ENCODE measurements at regions of chr19 and their contacts with region 1.

Region 1: DNA sequence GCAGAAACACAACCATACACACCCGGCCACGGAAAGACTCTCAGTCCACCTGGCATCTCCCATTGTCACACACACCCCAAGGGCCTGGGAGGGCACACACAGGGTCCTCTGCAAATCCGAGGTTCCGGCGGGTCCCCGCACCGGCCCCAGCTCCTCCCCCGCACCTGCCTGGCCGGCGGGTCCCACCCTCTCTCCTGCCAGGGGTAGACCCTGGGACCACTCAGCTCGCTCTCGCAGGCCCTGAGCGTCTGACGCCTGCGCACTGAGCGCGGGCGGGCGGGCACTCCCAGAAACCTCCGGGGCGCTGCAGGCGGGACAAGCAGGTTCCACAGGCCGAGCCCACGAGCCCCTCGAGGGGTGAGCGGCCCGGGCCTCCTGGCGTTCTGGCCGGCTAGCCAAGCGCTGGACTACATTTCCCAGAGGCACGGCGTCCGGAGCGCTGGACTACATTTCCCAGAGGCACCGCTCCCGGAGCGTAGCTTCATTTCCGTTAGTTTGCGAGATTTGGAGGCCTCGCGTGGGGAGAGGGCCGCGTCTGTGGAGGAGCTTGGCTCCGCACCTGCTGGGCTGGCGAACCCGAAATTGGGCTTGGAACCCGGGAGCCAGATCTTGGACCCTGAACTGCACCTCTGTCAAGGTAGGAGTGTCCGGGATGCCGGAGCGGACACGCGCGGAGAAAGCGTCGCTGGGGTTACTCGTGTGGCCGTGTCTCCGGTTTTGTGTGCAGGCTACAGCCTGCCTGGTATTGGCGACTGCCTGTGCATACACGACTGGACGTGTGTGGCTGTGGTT is at the start of gene ZNF420:
- DNase-seq: peak; percentile 95
- total RNA-seq, gene ZNF420: 6.5 TPM

Region 2: DNA sequence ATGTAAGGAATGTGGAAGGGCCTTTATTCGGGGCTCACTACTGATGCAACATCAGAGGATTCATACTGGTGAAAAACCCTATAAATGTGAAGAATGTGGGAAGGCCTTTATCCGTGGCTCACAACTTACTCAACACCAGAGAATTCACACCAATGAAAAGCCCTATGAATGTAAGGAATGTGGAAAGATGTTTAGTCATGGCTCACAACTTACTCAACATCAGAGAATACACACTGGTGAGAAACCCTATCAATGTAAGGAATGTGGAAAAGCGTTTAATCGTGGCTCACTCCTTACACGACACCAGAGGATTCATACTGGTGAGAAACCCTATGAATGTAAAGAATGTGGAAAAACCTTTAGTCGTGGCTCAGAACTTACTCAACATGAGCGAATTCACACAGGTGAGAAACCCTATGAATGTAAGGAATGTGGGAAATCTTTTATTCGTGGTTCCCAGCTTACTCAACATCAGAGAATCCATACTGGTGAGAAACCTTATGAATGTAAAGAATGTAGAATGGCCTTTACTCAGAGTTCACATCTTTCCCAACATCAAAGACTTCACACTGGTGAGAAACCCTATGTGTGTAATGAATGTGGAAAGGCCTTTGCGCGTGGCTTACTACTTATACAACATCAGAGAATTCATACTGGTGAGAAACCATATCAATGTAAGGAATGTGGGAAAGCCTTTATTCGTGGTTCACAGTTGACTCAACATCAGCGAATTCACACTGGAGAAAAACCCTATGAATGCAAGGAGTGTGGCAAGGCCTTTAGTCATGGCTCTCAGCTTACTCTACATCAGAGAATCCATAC is 50.1 kb after region 1 on chr19:
- intact Hi-C with region 1: no loop called
- DNase-seq: no peak

Region 3: DNA sequence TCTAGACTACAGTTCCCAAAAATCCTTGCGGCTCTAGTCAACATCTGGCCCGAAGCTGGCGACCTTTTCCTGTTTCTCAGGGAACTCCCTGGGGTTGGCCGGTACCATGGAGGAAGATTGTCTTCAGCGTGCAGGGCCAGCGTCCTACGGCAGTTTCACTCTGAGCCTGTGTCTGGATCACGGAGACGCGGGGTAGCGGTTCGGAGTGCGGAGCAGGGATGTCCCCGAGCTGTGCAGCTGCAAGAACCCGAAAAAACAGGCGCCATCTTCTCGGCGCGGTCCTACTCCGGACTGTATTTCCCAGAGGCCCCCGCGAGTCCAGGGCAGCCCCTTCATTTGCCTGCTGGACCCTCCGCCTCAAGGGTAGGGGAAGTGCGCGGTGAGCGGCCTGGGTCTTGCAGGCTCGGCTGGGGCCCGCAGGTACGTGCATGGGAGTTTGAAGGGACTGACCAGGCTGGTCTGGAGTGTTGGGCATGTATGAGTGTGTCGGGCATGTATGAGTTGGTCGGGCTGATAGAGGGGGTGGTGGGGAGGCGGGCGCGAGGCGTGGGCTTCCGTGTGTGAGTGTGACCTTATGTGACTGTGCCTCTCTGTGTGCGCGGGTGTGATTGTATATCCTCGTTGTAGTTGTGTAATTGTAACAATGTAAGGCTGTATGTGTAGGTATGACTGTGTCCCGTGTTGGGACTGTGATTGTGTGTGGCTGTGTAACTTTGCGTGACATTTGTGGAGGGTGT is 139.9 kb after region 1 on chr19 and contains the start of gene ZNF383:
- intact Hi-C with region 1: loop called (anchors 5 kb)
- DNase-seq: peak; percentile 92
- total RNA-seq, gene ZNF383: 9.2 TPM